ENCODE measurements at regions of chr2 and their contacts with region 1.

Region 1: GRCh38 chr2:46876741-46877384 is 38.7 kb downstream of the MCFD2 start:
- DNase-seq: peak; percentile 8
- H3K4me3 Mint-ChIP-seq: no peak overlapping the region
- H3K27ac Mint-ChIP-seq: no peak overlapping the region
- H3K4me1 Mint-ChIP-seq: no peaks in the 10 kb centered on the region
- H3K27me3 Mint-ChIP-seq: no peaks in the 10 kb centered on the region

Region 2: GRCh38 chr2:46657042-46657504 is 219.8 kb before region 1 on chr2:
- CTCF ChIA-PET with region 1: no interaction called
- intact Hi-C with region 1: loop called (anchors 1 kb)
- DNase-seq: no peak
- H3K4me3 Mint-ChIP-seq: no peak overlapping the region
- H3K27ac Mint-ChIP-seq: no peak overlapping the region
- H3K4me1 Mint-ChIP-seq: no peaks in the 10 kb centered on the region
- H3K27me3 Mint-ChIP-seq: peaks cover 7% of the 10 kb centered on the region